ENCODE measurements at regions of chr5 and their contacts with region 1.

Region 1: DNA sequence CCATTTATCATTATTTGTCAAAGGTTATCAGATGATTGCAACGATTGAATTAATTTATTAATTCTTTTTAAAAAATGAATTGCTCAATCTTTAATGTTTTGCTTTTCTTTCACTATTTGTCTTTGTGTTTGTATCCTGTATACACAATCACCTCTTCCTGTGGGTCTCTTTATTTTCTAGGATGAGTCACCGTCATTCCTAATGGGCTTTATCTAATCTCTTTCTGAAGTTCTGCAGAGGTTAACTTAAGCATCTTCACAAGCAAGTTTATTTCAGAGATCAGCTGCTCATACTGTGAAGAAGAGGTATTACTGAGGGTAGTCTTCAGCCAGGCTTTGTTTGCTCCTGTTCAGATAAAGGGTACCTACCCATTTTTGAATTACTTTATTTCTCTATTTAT is 323.9 kb downstream of the NNT start:
- DNase-seq: no peak
- ATAC-seq: no peak

Region 2: GRCh38 chr5:43401827-43402226 is 525.1 kb before region 1 on chr5:
- intact Hi-C with region 1: no loop called
- DNase-seq: no peak
- ATAC-seq: no peak

Region 3: GRCh38 chr5:43631182-43631910 is 295.6 kb before region 1 on chr5:
- intact Hi-C with region 1: no loop called
- DNase-seq: peak; percentile 26
- ATAC-seq: peak; percentile 84 to 91

Region 4: GRCh38 chr5:43967165-43967564 is 40.2 kb after region 1 on chr5:
- intact Hi-C with region 1: no loop called
- DNase-seq: no peak
- ATAC-seq: no peak

Region 5: GRCh38 chr5:44332285-44332971 is 405.5 kb after region 1 on chr5:
- intact Hi-C with region 1: no loop called
- DNase-seq: no peak
- ATAC-seq: peak; percentile 21 to 65

Region 6: GRCh38 chr5:45796959-45797553 is 1870.1 kb after region 1 on chr5:
- intact Hi-C with region 1: loop called in 1 of 2 experiments (anchors 10 kb)
- DNase-seq: no peak
- ATAC-seq: no peak

Measured in left cardiac atrium (tissue), 4 donors.